GM10248 (cell line): ENCODE measurements at regions of chr2 and their contacts with region 1.

Region 1: DNA sequence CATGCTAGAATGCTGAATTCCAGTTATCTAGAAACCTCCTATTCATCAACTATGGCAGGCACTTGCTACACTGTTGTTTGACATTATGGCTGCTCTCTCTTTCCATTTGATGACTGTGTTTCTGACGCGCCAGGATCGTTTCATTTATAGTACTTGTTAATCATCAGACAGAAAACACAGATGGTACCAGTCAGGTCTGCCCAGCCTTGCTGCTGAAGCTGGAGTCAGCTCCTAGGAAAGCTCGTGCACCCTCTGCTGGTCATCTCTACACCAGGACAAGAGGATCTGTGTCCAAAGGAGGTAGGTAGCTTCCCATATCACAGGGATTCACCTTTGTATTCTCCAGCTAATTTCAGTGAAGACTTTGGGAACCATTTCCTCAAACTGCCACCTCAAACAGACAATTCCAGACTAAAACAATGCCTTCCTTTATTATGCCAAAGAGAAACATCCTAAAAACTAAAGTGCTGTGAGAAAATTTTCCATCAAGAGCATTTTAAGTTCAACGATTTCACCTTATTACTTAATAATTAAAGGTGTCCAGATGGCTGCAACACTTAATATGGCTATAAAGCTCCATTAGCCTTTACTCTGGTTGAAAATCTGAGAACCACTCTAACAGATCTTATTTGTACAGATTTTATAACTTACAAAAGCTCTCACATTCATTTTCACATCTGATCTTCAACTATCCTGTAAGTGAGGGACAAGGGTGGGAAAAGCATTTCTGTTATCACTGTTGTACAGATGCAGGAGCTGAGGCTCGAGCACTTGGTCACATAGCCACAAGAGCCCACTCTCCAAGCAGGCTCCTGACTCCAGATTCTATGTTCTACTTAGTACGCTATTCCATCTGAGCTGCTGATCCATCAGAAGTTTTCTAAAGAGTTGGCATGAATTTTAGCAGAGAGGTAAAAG is 17.5 kb downstream of the METTL8 start:
- DNase-seq: peak; percentile 74
- CTCF ChIP-seq: peak; percentile 80

Region 2: GRCh38 chr2:171260471-171261424 is 155.5 kb before region 1 on chr2:
- CTCF ChIA-PET with region 1: interaction called, 10 read pairs
- POLR2A ChIA-PET with region 1: interaction called, 3 read pairs
- DNase-seq: peak; percentile 43
- CTCF ChIP-seq: peak; percentile 5

Region 3: DNA sequence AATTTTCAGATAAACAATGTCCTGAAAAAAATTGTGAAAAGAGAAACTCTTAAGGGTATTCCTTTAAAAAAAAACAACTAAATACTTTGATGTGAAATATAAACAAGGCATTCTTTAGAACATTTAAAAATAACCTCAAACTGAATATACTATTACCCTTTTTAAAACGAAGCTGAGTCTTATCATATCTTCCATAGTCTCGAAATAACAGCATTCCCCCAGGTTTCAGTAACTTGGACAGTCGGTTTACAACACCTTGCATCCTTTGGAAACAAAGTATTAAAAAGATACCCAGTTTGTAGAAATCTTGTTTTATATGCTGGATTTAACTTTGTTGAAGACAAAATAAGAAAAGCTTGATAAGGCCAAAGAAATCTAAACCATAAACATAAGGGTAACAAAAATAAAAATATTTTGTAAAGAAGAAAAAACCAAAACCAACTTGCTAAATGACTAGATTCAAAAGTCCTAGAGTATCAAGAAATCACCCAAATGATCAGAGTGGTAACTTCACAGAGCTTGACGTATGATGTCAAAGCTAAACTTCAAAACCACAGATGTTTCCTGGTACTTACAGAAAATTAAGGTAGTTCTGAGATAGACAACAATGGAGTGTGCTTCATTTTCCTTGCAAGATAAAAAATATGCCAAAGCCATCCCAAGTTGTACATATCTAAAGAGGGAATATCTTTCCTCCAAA is 90.2 kb before region 1 on chr2:
- CTCF ChIA-PET with region 1: interaction called, 14 read pairs
- POLR2A ChIA-PET with region 1: interaction called, 6 read pairs
- DNase-seq: no peak
- CTCF ChIP-seq: no peak

Region 4: DNA sequence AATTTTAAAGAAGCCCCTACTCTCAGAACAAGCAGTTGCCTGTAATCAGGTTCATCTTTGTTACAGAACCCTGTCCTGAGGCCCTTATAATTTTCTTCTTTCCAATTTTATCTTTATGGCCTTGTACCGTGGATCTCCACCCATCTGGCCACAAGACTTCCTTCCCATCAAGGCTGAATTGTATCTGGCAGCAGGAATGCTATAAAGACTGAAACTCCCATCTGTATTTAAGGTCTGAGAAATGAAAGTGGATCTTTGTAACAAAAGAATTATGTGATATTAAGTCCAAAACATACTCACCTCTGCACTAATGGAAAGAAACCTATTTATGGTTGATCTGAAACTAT is 74.2 kb before region 1 on chr2:
- CTCF ChIA-PET with region 1: interaction called, 10 read pairs
- POLR2A ChIA-PET with region 1: no interaction called
- DNase-seq: no peak
- CTCF ChIP-seq: no peak

Region 5: DNA sequence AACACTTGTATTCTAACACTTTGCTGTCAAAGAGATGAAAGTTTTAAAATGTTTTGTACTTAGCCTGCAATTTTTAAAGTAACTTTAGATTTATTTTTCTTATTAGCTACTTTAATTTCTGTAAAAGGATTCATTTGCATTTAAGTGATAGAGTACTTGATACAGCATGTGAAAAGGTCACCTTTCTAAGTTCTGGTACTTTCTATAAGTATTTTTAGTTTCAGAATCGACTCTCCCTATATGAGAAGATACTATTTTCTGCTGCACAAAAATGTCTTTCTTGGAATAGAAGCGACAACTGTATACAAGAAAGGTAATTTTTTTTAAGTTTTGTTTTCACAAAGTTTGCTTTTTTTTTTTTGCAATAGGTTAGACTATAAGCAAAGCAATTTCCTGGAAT is 55.4 kb before region 1 on chr2:
- CTCF ChIA-PET with region 1: interaction called, 10 read pairs
- POLR2A ChIA-PET with region 1: no interaction called
- DNase-seq: no peak
- CTCF ChIP-seq: no peak

Region 6: DNA sequence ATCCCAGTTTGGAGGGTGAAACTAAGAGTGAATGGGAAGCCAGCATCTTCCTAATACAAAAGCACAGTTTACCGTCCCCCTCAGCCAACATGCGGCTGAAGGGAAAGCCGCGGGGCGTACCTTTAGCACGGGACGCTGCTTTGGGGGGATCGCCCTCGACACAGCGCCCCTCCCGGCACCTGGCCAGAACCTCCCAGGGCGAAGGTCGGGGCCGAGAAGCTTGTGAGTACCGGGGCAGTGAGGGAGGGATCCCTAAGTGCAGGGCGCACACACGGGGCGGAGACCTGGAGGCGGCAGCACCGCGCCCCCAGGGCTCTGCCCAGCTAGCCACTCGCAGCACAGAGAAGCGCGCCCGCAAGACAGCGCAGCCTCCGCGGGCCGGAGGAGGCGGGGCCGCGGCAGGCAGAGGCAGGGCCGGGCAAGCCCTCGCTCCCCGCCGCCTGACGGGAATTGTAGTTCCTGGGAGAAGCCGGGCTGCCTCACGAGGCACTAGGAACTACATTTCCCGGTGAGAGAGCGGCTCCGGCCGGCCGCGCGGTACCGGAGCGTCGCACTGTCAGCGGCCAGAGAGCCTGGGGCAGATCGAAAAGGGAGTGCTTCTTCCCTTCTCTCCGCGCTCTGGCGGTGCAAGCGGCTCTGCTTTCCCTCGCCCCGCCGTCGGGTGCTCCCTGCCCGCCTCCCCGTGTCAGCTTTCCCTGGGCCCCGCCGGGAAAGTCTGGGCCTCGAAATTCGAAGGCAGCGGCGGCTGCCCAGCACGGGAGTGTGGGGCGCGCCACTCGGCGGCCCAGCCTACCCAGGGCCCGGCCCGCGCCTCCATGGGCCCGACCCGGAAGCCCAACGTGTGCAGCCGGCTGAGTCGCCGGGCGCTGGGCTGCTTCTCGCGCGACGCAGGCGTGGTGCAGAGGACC is 17.7 kb after region 1 on chr2 and contains the starts of genes DCAF17 and METTL8:
- CTCF ChIA-PET with region 1: interaction called, 73 read pairs
- POLR2A ChIA-PET with region 1: interaction called, 6 read pairs
- DNase-seq: peak; percentile 95
- CTCF ChIP-seq: peak; percentile 58

Region 7: GRCh38 chr2:171553858-171554257 is 137.6 kb after region 1 on chr2:
- CTCF ChIA-PET with region 1: no interaction called
- POLR2A ChIA-PET with region 1: no interaction called
- DNase-seq: no peak
- CTCF ChIP-seq: no peak

Region 8: DNA sequence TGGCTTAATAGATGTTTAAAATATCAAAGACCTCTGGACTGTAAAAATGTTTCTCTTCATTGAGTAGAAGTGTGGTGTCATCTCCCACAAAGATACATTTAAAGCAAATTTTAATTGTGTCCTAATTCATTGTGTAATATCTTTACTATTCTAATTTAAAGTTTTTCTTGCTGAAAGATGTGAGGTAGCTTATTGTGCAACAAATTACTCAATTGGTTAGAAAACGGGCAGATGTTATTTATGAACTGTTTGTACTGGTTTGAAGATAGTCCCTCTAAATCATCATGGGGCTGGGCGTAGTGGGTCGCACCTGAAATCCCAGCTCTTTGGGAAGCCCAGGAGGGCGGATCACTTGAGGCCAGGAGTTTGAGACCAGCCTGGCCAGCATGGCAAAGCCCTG is 171.3 kb after region 1 on chr2:
- CTCF ChIA-PET with region 1: no interaction called
- POLR2A ChIA-PET with region 1: no interaction called
- DNase-seq: no peak
- CTCF ChIP-seq: no peak

Region 9: DNA sequence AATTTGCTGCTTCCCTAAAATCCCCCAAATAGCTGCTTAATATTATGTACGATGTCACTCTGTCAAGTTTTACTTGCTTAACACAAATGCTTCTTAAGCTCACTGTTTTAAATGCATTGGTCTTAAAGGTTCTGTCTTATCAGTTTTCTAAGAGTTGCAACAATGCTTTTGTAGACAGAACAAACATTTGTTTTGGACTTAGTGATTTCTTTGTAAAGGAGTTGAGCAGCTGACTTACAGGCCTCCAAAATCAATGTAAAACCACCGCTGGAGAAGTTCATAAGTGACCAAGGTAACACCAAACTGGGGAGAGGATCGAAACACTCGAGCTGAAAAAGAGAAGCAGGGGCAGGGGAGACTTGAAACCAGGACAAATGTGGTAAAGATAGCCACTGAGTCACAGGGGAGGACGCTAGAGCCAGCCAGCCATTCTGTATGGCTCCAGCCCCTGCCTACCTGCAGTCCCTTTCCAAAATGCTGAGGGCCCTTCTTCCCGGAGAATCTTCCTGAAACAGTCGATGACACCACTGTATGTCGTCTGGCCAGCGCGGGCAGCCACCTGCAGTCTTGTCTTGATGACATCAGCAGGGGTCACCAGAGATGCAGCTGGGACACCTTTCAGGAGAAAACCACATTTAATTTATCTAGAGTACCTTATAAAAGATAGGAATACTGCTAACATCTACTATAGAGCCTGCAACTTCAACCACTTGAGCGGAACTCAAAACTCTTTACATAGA is 371.2 kb after region 1 on chr2:
- CTCF ChIA-PET with region 1: no interaction called
- POLR2A ChIA-PET with region 1: no interaction called
- DNase-seq: no peak
- CTCF ChIP-seq: no peak